Gastrocnemius medialis (tissue), 4 donors: ENCODE measurements at regions of chr7 and their contacts with region 1.

Region 1: DNA sequence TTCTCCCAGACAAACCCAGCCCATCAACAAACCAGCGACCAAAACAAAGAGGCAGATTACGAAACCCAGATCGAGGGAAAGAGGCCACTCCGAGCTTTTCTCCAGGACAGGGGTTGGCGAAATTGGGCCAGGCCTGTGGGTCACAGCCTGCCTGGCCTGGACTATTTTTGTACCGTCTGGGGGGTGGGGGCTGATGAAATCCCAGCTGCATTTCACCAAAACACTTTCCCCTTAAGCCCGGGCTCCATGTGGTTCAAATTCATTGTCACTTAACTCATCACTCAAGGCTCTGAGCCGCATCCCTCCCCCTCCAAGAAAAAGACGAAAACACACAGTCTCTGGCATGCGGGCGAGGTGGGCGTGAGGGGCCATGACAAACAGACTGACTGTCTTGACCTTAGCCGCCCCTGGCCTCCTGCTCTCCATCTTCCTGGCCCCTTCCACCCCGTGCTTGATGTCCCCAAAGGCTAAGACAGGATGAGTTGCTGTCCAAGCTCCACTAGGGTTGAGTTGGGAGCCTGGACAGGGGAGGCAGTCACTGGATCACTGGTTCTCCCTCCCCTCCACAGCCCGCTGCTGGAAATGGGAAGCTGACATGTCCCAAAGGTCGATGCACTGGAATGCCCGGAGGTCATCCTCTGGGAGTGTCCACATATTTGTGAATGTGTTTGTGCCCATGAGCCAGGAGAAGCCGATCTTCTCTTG is 19.2 kb downstream of the TMEM270 start:
- DNase-seq: peak in 1 of 2 donors; percentile 61
- ATAC-seq: peak; percentile 51 to 53
- H3K4me3 ChIP-seq: no peak overlapping the region
- H3K27ac ChIP-seq: peak overlapping the region; percentile 55 to 68 (median 62)
- H3K4me1 ChIP-seq: peaks cover 21 to 22% of the 10 kb centered on the region in 2 donors
- H3K27me3 ChIP-seq: peaks cover 0 to 14% (median 0%) of the 10 kb centered on the region in 3 donors
- CTCF ChIP-seq: no peak
- POLR2A ChIP-seq: no peak

Region 2: GRCh38 chr7:73738612-73739374 is 141.3 kb before region 1 on chr7 and contains the start of gene ABHD11:
- in situ Hi-C with region 1: no loop called
- intact Hi-C with region 1: no loop called
- DNase-seq: peak; percentile 96 to 98
- ATAC-seq: peak; percentile 92 to 93
- H3K4me3 ChIP-seq: peak within 1 kb of the TSS; percentile 71 to 98 (median 86)
- H3K27ac ChIP-seq: peak within 1 kb of the TSS; percentile 79 to 88 (median 85)
- H3K4me1 ChIP-seq: peaks cover 0 to 11% of the 10 kb centered on the region in 2 donors
- H3K27me3 ChIP-seq: no peaks in the 10 kb centered on the region
- CTCF ChIP-seq: no peak
- POLR2A ChIP-seq: peak; percentile 51 to 65
- total RNA-seq, gene ABHD11: 3.2 to 9.4 (median 7.6) TPM

Region 3: GRCh38 chr7:74026903-74027551 is 146.9 kb after region 1 on chr7:
- in situ Hi-C with region 1: loop called in 1 of 4 experiments (anchors 10 kb)
- intact Hi-C with region 1: no loop called
- DNase-seq: peak; percentile 51 to 61
- ATAC-seq: peak; percentile 57 to 60
- H3K4me3 ChIP-seq: peak overlapping the region; percentile 29 to 49 (median 48)
- H3K27ac ChIP-seq: peak overlapping the region; percentile 53 to 70 (median 62)
- H3K4me1 ChIP-seq: peaks cover 26 to 44% of the 10 kb centered on the region in 2 donors
- H3K27me3 ChIP-seq: peaks cover 0 to 17% (median 0%) of the 10 kb centered on the region in 3 donors
- CTCF ChIP-seq: peak; percentile 70 to 95 (median 89)
- POLR2A ChIP-seq: no peak